Mucosa of descending colon (tissue), 3 donors: ENCODE measurements at regions of chr3 and their contacts with region 1.

Region 1: DNA sequence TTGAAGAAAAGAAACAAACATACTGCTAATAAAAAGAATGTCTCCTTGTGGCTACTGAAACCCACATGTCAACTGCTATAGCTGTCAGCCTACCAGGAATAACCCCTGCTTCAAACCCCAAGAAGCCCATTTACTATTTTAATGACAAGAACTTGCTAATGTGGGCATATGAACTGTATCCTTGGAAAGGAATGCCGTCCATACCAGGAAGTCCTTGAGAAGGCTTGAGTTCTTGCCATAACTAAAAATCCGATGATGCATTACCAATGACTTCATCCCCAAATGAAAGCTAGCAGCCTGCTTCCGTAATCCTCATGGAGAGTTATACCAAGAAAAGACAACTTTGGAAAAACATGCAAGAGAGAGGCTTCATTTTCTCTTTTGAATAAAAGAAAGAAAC is 34.8 kb downstream of the MINDY4B start:
- DNase-seq: no peak
- ATAC-seq: no peak
- H3K4me3 ChIP-seq: no peak overlapping the region
- H3K4me1 ChIP-seq: no peaks in the 10 kb centered on the region
- CTCF ChIP-seq: no peak

Region 2: GRCh38 chr3:150635076-150635475 is 235.3 kb before region 1 on chr3:
- intact Hi-C with region 1: no loop called
- DNase-seq: no peak
- ATAC-seq: no peak
- H3K4me3 ChIP-seq: no peak overlapping the region
- H3K4me1 ChIP-seq: no peaks in the 10 kb centered on the region
- CTCF ChIP-seq: no peak

Region 3: DNA sequence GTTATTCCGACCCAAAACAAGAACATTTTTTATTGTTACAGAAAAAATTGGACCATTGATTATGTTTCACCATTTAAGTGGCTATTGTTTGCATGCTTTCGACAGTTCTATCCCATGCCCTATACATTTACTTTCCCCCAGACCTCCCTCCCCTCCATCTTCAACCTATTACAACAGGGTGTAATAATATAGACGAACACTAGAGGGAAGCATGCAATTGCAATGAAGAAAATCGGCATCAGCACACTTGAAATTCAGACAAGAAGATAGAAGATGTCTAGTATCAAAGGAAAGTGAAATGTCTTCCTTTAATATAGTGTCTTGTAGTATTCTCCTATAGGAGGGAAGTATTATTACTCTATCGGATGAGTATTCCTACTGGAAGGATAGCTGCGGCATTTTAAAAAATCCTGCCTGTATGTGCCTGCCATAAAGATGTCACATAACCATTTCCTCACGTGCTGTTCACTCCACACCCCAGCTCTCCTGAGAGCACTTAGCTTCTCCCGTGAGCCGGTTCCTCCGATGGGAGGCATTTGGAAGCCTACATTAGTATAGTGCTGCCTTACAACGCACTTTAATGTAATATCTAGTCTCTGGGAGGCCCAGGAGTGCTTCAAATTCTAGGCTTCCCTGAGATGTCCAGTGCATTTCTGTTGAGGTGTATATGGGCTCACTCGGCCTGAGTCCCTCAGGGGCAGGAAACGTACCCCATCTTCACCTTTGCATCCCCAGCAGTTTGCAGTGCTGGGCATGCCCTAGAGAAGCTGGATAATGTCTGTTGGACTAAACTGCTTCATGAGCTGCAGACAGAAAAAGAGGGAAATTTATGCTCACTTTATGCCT is 148.9 kb before region 1 on chr3:
- intact Hi-C with region 1: loop called (anchors 2 to 5 kb)
- DNase-seq: no peak
- ATAC-seq: peak; percentile 55
- H3K4me3 ChIP-seq: no peak overlapping the region
- H3K4me1 ChIP-seq: peaks cover 20% of the 10 kb centered on the region
- CTCF ChIP-seq: peak; percentile 60

Region 4: DNA sequence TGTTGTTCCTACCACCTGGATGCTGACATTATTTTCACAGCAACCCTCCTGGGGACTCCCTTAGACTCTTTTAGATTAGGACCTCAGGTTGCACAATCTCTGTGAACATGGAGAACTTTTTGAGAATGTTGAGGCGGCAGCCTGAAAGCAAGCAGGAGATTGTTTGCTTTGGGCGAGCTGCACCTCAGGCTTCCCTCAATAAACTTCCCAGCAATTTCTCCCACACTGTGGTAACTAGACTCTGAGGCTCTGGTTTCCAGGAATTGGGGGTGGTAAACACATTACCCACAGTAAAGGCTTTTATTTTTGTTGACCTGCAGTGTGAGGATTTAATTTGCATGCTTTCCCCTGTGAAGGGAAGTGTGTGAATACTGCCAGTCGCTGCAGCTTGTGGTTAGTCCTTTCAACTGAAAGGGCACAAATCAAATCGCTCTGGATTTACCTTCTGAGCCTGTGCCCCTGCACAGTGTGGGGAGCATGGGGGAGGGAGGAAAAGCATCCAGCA is 72.2 kb before region 1 on chr3:
- intact Hi-C with region 1: loop called in 1 of 2 experiments (anchors 10 kb)
- DNase-seq: no peak
- ATAC-seq: peak; percentile 75
- H3K4me3 ChIP-seq: no peak overlapping the region
- H3K4me1 ChIP-seq: no peaks in the 10 kb centered on the region
- CTCF ChIP-seq: no peak

Region 5: GRCh38 chr3:150996731-150997130 is 126.3 kb after region 1 on chr3:
- intact Hi-C with region 1: no loop called
- DNase-seq: no peak
- ATAC-seq: no peak
- H3K4me3 ChIP-seq: no peak overlapping the region
- H3K4me1 ChIP-seq: no peaks in the 10 kb centered on the region
- CTCF ChIP-seq: no peak

Region 6: DNA sequence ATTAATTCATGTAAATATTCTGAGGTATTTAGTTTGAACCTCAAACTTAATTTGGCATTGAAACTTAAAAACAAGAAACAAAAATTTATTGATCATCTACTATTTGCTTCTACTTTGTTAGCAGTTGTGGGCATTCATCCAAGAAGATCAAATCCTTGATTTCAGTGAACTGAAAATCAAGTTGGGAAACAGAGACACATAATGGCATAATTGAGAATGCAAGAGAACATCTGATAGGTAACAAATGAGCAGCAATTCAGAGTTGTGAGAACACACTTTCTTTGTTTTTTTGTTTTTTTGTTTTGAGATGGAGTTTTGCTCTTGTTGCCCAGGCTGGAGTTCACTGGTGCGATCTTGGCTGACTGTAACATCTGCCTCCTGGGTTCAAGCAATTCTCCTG is 181.1 kb after region 1 on chr3:
- intact Hi-C with region 1: no loop called
- DNase-seq: no peak
- ATAC-seq: no peak
- H3K4me3 ChIP-seq: no peak overlapping the region
- H3K4me1 ChIP-seq: no peaks in the 10 kb centered on the region
- CTCF ChIP-seq: no peak